ENCODE measurements at regions of chr2 and their contacts with region 1.

Region 1: GRCh38 chr2:131492418-131493198 is 411 bp upstream of the MZT2A start:
- DNase-seq: peak; percentile 93 to 98 (median 95)
- H3K4me3 ChIP-seq: peak overlapping the region; percentile 90 to 93
- H3K4me3 Mint-ChIP-seq: peak overlapping the region; percentile 93 to 99 (median 96)
- H3K27ac ChIP-seq: peak overlapping the region; percentile 94
- H3K27ac Mint-ChIP-seq: peak overlapping the region; percentile 97 to 100 (median 99)
- H3K4me1 ChIP-seq: peaks cover 38% of the 10 kb centered on the region
- H3K4me1 Mint-ChIP-seq: peaks cover 15 to 56% (median 37%) of the 10 kb centered on the region in 4 donors
- H3K27me3 ChIP-seq: no peaks in the 10 kb centered on the region
- H3K27me3 Mint-ChIP-seq: no peaks in the 10 kb centered on the region

Region 2: DNA sequence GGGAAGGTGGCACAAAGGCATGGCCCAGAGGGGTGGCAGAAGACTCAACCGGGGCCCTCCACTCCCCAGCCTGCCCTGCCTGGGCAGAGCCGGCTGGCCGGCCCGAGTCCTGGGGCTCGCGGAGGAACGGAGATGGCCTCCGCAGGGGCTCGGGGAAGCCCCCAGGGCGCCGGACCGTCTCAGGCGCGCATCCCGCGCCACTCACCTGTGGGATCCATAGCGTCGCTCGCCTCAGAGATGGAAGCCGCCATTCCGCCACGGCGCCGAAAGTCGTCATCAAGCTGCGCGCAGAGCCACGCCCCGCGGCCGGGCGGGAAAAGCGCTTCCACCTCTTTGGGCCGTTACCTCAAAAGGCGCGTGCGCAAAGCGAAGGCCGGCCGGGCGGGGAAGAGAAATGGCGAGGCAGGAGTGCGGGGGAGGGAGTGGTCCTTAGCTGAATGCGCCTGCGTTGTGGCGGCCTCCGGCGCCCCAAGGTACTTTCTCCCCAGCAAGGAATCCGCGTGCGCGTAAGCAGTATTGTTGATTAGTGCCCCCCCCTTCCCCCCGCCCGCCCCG is 1311.2 kb before region 1 on chr2 and contains the start of gene SMPD4:
- CTCF ChIA-PET with region 1: interaction called, 7 read pairs
- POLR2A ChIA-PET with region 1: interaction called, 14 read pairs
- intact Hi-C with region 1: loop called (anchors 2 kb)
- DNase-seq: peak; percentile 97 to 98 (median 98)
- H3K4me3 ChIP-seq: peak within 1 kb of the TSS; percentile 81 to 97
- H3K4me3 Mint-ChIP-seq: peak within 1 kb of the TSS; percentile 90 to 97 (median 91)
- H3K27ac ChIP-seq: peak within 1 kb of the TSS; percentile 90
- H3K27ac Mint-ChIP-seq: peak within 1 kb of the TSS; percentile 94 to 98 (median 96)
- H3K4me1 ChIP-seq: peaks cover 28% of the 10 kb centered on the region
- H3K4me1 Mint-ChIP-seq: peaks cover 11 to 47% (median 23%) of the 10 kb centered on the region in 4 donors
- H3K27me3 ChIP-seq: no peaks in the 10 kb centered on the region
- H3K27me3 Mint-ChIP-seq: no peaks in the 10 kb centered on the region
- total RNA-seq, gene SMPD4: 48.8 to 51.5 TPM

Region 3: DNA sequence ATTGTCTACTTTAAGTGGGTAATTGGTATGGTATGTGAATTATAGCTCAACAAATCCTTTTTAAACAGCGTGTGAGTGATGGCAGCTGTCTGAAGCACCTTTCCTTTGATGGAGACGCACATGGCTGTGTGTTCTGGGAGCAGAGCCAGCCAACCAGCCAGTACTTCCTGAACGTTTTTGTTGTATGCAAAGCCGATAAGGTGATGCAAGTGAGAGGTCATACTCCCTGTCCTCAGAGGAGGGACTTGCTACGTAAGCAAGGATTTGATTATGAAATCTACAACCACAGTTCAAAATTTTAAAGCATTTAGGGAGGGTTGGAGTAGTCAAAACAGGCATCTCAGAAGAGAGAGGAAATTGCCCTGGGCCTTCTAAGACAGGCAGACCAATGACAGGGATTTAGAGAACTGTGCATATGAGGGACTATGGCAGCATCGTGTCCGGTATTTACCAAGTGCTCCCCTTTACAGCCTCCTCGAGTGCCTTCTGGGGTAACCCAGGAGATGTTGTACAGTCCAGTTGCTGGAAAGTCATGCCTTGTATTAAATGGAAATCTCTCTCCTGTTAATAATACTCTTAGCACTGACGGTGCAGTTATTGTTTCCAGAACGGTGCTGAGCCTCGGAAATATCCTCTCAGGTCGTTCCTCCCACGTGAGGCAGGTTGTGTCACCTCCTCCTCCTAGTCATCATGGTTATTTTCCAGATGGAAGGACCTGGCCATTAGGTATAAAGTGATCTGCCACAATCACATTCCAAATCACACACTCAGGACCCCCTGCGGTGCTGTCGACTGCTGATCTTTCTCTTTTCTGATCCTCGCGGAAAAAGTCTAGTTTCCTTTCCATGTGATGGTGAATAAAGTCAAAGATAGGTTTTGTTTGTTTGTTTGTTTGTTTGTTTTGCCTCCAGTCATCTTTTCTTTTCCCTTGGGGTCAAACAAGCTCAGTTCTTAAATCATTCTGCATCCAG is 627.5 kb before region 1 on chr2:
- CTCF ChIA-PET with region 1: no interaction called
- POLR2A ChIA-PET with region 1: no interaction called
- intact Hi-C with region 1: no loop called
- DNase-seq: no peak
- H3K4me3 ChIP-seq: no peak overlapping the region
- H3K4me3 Mint-ChIP-seq: no peak overlapping the region
- H3K27ac ChIP-seq: no peak overlapping the region
- H3K27ac Mint-ChIP-seq: peak overlapping the region in 2 of 7 donors; percentile 13 to 35
- H3K4me1 ChIP-seq: no peaks in the 10 kb centered on the region
- H3K4me1 Mint-ChIP-seq: no peaks in the 10 kb centered on the region
- H3K27me3 ChIP-seq: no peaks in the 10 kb centered on the region
- H3K27me3 Mint-ChIP-seq: peaks cover 2 to 6% of the 10 kb centered on the region in 2 donors

Region 4: DNA sequence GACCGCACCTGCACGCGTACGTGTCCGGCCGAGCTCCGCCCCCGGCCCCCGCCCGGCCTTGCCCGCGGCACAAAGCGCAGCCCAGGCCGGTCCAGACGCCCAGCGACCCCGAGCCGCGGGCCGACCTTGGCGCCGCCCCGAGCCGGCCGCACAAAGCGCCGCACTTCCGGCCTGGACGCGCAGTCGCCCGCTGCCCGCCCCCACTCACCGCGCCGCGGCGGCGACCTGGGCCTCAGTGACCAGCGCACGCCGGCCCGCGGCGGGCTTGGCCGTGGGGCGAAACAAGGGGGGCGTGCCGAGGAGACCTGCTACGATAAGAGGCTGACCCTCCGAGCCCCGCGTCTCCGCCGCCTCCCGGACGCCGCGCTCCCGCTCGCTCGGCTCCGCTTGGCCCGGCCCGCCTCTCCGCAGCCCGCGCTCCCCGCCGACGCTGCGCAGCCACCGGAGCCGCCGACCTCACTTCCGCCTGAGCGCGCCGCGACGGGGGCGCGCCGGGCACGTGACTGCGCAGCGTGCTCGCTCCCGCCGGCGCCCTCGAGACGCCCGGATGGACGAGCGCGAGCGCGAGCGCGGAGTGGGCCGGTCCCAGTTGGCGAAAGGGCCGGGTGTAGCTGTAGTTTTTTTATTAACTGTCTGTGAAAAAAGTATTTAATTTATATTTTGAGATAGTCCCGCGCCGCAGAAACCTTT is 399.5 kb before region 1 on chr2 and contains the start of gene FAM168B:
- CTCF ChIA-PET with region 1: interaction called, 3 read pairs
- POLR2A ChIA-PET with region 1: interaction called, 13 read pairs
- intact Hi-C with region 1: loop called (anchors 5 kb)
- DNase-seq: peak; percentile 86 to 93 (median 91)
- H3K4me3 ChIP-seq: peak within 1 kb of the TSS; percentile 86 to 91
- H3K4me3 Mint-ChIP-seq: peak within 1 kb of the TSS; percentile 85 to 99 (median 93)
- H3K27ac ChIP-seq: peak within 1 kb of the TSS; percentile 89
- H3K27ac Mint-ChIP-seq: peak within 1 kb of the TSS; percentile 92 to 98 (median 97)
- H3K4me1 ChIP-seq: peaks cover 22% of the 10 kb centered on the region
- H3K4me1 Mint-ChIP-seq: peaks cover 12 to 38% (median 22%) of the 10 kb centered on the region in 4 donors
- H3K27me3 ChIP-seq: no peaks in the 10 kb centered on the region
- H3K27me3 Mint-ChIP-seq: no peaks in the 10 kb centered on the region
- total RNA-seq, gene FAM168B: 79.4 to 81.0 TPM

Region 5: GRCh38 chr2:131413148-131413747 is 79.4 kb before region 1 on chr2:
- CTCF ChIA-PET with region 1: interaction called, 8 read pairs
- POLR2A ChIA-PET with region 1: no interaction called
- intact Hi-C with region 1: loop called (anchors 5 kb)
- DNase-seq: peak in 4 of 5 donors; percentile 35 to 44 (median 42)
- H3K4me3 ChIP-seq: no peak overlapping the region
- H3K4me3 Mint-ChIP-seq: no peak overlapping the region
- H3K27ac ChIP-seq: no peak overlapping the region
- H3K27ac Mint-ChIP-seq: peak overlapping the region in 1 of 7 donors; percentile 53
- H3K4me1 ChIP-seq: no peaks in the 10 kb centered on the region
- H3K4me1 Mint-ChIP-seq: peaks cover 0 to 1% (median 0%) of the 10 kb centered on the region in 4 donors
- H3K27me3 ChIP-seq: peaks cover 4% of the 10 kb centered on the region
- H3K27me3 Mint-ChIP-seq: peaks cover 9 to 28% of the 10 kb centered on the region in 2 donors

Region 6: GRCh38 chr2:131425231-131425941 is 67.2 kb before region 1 on chr2:
- CTCF ChIA-PET with region 1: no interaction called
- POLR2A ChIA-PET with region 1: no interaction called
- intact Hi-C with region 1: no loop called
- DNase-seq: no peak
- H3K4me3 ChIP-seq: no peak overlapping the region
- H3K4me3 Mint-ChIP-seq: peak overlapping the region in 5 of 8 donors; percentile 7 to 60 (median 51)
- H3K27ac ChIP-seq: no peak overlapping the region
- H3K27ac Mint-ChIP-seq: no peak overlapping the region
- H3K4me1 ChIP-seq: no peaks in the 10 kb centered on the region
- H3K4me1 Mint-ChIP-seq: peaks cover 3 to 8% (median 5%) of the 10 kb centered on the region in 4 donors
- H3K27me3 ChIP-seq: peaks cover 5% of the 10 kb centered on the region
- H3K27me3 Mint-ChIP-seq: peaks cover 50% of the 10 kb centered on the region in 2 donors

Region 7: GRCh38 chr2:131673392-131674173 is 181.0 kb after region 1 on chr2:
- CTCF ChIA-PET with region 1: interaction called, 14 read pairs
- POLR2A ChIA-PET with region 1: interaction called, 5 read pairs
- intact Hi-C with region 1: loop called (anchors 1 kb)
- DNase-seq: peak; percentile 39 to 66 (median 52)
- H3K4me3 ChIP-seq: no peak overlapping the region
- H3K4me3 Mint-ChIP-seq: peak overlapping the region; percentile 44 to 78 (median 70)
- H3K27ac ChIP-seq: no peak overlapping the region
- H3K27ac Mint-ChIP-seq: no peak overlapping the region
- H3K4me1 ChIP-seq: peaks cover 17% of the 10 kb centered on the region
- H3K4me1 Mint-ChIP-seq: peaks cover 4 to 7% (median 5%) of the 10 kb centered on the region in 4 donors
- H3K27me3 ChIP-seq: peaks cover 12% of the 10 kb centered on the region
- H3K27me3 Mint-ChIP-seq: peaks cover 6 to 18% of the 10 kb centered on the region in 2 donors

Measured in CD4-positive, alpha-beta memory T cell (primary cell).